ENCODE measurements at regions of chr2 and their contacts with region 1.

Region 1: DNA sequence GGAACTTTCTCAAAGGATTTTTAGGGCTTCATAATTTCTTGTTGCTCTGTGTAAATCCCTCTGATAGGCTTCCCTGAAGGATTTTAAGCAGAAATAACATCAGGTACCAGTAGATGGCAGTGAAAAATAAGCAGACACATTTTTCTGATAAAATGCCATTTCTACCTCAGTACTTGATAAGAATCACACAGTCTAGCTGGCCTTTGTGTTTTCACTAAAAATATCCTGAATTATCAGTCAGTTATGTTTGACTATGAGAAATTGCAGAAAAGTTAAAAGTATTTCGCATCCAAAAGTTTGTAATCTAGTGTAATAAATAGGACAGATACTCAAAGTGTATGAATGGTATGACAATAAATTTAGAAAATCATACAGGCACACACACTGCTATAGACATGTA is 68.7 kb downstream of the DNAJC10 start:
- DNase-seq: peak; percentile 9
- H3K4me3 ChIP-seq: no peak overlapping the region
- H3K27ac ChIP-seq: no peak overlapping the region
- H3K4me1 ChIP-seq: no peaks in the 10 kb centered on the region
- H3K27me3 ChIP-seq: no peaks in the 10 kb centered on the region
- CTCF ChIP-seq: peak; percentile 33 to 51

Region 2: GRCh38 chr2:182980115-182980514 is 195.3 kb after region 1 on chr2:
- CTCF ChIA-PET with region 1: interaction called, 3 read pairs
- dilution Hi-C with region 1: no loop called
- in situ Hi-C with region 1: no loop called
- intact Hi-C with region 1: loop called (anchors 1 kb)
- DNase-seq: peak; percentile 12
- H3K4me3 ChIP-seq: no peak overlapping the region
- H3K27ac ChIP-seq: no peak overlapping the region
- H3K4me1 ChIP-seq: no peaks in the 10 kb centered on the region
- H3K27me3 ChIP-seq: no peaks in the 10 kb centered on the region
- CTCF ChIP-seq: peak; percentile 30 to 52

Measured in mammary epithelial cell (primary cell).